ENCODE measurements at regions of chr12 and their contacts with region 1.

Region 1: GRCh38 chr12:31325877-31326631 is at the start of gene SINHCAF:
- DNase-seq: peak; percentile 91 to 99
- ATAC-seq: peak; percentile 72 to 84
- H3K4me3 ChIP-seq: peak within 1 kb of the TSS; percentile 86
- H3K27ac ChIP-seq: peak within 1 kb of the TSS; percentile 88 to 97
- H3K4me1 ChIP-seq: peaks cover 26% of the 10 kb centered on the region
- CTCF ChIP-seq: no peak
- EP300 ChIP-seq: no peak
- POLR2A ChIP-seq: peak; percentile 94
- RAD21 ChIP-seq: no peak
- polyA plus RNA-seq, gene SINHCAF: 81.8 and 106 TPM in 2 replicates

Region 2: DNA sequence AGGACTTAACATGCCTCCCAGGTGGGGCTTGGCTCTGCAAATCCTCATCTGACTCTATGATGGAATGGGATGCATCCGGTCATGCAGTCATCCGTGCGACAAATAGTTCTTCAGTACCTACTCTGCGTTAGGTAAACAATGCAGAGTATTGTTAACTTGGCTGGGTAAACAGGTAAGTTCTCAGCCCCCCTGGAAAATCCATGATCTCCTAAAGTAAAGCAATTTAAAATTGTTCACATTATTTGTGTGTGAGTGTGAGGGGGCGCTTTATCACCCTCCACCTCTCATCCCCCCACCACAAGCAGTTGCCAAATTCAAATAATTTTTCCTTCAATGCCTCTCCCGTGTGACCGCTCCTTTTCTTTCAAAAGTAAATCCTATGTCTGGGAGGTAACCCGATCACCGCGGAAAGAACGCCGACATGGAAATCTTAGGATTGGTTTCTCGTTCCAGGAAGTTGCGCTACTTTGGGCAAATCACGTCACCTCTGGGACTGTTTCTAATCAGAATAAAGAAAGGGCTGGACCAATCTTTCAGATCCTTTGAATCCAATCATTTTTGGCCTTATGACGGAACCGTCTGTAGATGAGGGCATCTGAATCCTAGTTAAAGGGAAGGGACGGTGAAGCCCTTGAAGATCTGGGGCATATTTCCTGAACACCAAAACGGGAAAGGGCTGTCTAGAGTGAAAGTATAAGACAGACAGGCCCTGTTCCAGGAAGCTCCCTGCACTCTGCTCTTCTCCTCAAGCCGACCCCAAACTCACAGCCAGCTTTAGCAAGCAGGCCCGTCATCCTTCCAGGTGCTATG is 43.9 kb after region 1 on chr12:
- CTCF ChIA-PET with region 1: interaction called, 3 read pairs
- POLR2A ChIA-PET with region 1: interaction called, 11 read pairs
- DNase-seq: no peak
- ATAC-seq: peak in 1 of 2 experiments; percentile 27; a peak in 2 of 6 replicates
- H3K4me3 ChIP-seq: no peak overlapping the region
- H3K27ac ChIP-seq: no peak overlapping the region
- H3K4me1 ChIP-seq: peaks cover 16% of the 10 kb centered on the region
- CTCF ChIP-seq: no peak
- EP300 ChIP-seq: no peak
- POLR2A ChIP-seq: no peak
- RAD21 ChIP-seq: no peak

Region 3: GRCh38 chr12:31423405-31423804 is 97.4 kb after region 1 on chr12:
- CTCF ChIA-PET with region 1: no interaction called
- POLR2A ChIA-PET with region 1: no interaction called
- DNase-seq: no peak
- ATAC-seq: no peak
- H3K4me3 ChIP-seq: no peak overlapping the region
- H3K27ac ChIP-seq: no peak overlapping the region
- H3K4me1 ChIP-seq: no peaks in the 10 kb centered on the region
- CTCF ChIP-seq: no peak
- EP300 ChIP-seq: no peak
- POLR2A ChIP-seq: no peak
- RAD21 ChIP-seq: no peak

Measured in A549 (cell line).